ENCODE measurements at regions of chr14 and their contacts with region 1.

Region 1: GRCh38 chr14:22168092-22168955 is 420.7 kb downstream of the DAD1 start:
- DNase-seq: peak in 1 of 2 experiments; percentile 21
- H3K4me3 ChIP-seq: no peak overlapping the region
- H3K4me3 Mint-ChIP-seq: no peak overlapping the region
- H3K27ac Mint-ChIP-seq: no peak overlapping the region
- H3K4me1 ChIP-seq: peaks cover 12% of the 10 kb centered on the region; the same call in 1 of the 2 replicates
- H3K4me1 Mint-ChIP-seq: peaks cover under 1% of the 10 kb centered on the region
- H3K27me3 ChIP-seq: no peaks in the 10 kb centered on the region
- H3K27me3 Mint-ChIP-seq: no peaks in the 10 kb centered on the region
- CTCF ChIP-seq: peak in 1 of 2 experiments; percentile 26

Region 2: GRCh38 chr14:22143363-22143762 is 25.0 kb before region 1 on chr14:
- CTCF ChIA-PET with region 1: no interaction called
- POLR2A ChIA-PET with region 1: no interaction called
- intact Hi-C with region 1: no loop called
- DNase-seq: no peak
- H3K4me3 ChIP-seq: no peak overlapping the region
- H3K4me3 Mint-ChIP-seq: no peak overlapping the region
- H3K27ac Mint-ChIP-seq: no peak overlapping the region
- H3K4me1 ChIP-seq: no peaks in the 10 kb centered on the region
- H3K4me1 Mint-ChIP-seq: no peaks in the 10 kb centered on the region
- H3K27me3 ChIP-seq: no peaks in the 10 kb centered on the region
- H3K27me3 Mint-ChIP-seq: peaks cover 11% of the 10 kb centered on the region
- CTCF ChIP-seq: no peak

Region 3: GRCh38 chr14:22213120-22213519 is 44.8 kb after region 1 on chr14:
- CTCF ChIA-PET with region 1: no interaction called
- POLR2A ChIA-PET with region 1: no interaction called
- intact Hi-C with region 1: no loop called
- DNase-seq: peak in 1 of 2 experiments; percentile 18
- H3K4me3 ChIP-seq: no peak overlapping the region
- H3K4me3 Mint-ChIP-seq: no peak overlapping the region
- H3K27ac Mint-ChIP-seq: no peak overlapping the region
- H3K4me1 ChIP-seq: 0 out of 2 replicates have a peak, but pooled peaks cover 4% of the 10 kb centered on the region
- H3K4me1 Mint-ChIP-seq: no peaks in the 10 kb centered on the region
- H3K27me3 ChIP-seq: no peaks in the 10 kb centered on the region
- H3K27me3 Mint-ChIP-seq: no peaks in the 10 kb centered on the region
- CTCF ChIP-seq: no peak

Region 4: GRCh38 chr14:22472935-22473854 is 304.9 kb after region 1 on chr14:
- CTCF ChIA-PET with region 1: interaction called, 5 read pairs
- POLR2A ChIA-PET with region 1: no interaction called
- intact Hi-C with region 1: loop called (anchors 5 kb)
- DNase-seq: peak; percentile 39 to 55
- H3K4me3 ChIP-seq: no peak overlapping the region
- H3K4me3 Mint-ChIP-seq: no peak overlapping the region
- H3K27ac Mint-ChIP-seq: no peak overlapping the region
- H3K4me1 ChIP-seq: peaks cover 4% of the 10 kb centered on the region; the same call in 1 of the 2 replicates
- H3K4me1 Mint-ChIP-seq: peaks cover 13% of the 10 kb centered on the region
- H3K27me3 ChIP-seq: no peaks in the 10 kb centered on the region
- H3K27me3 Mint-ChIP-seq: no peaks in the 10 kb centered on the region
- CTCF ChIP-seq: peak; percentile 60 to 66

Measured in Caco-2 (cell line).